Lower leg skin (tissue), 4 donors: ENCODE measurements at regions of chr5 and their contacts with region 1.

Region 1: GRCh38 chr5:135890867-135891266 is 4.8 kb downstream of the IL9 start:
- DNase-seq: no peak
- H3K4me3 ChIP-seq: no peak overlapping the region
- CTCF ChIP-seq: no peak
- POLR2A ChIP-seq: no peak

Region 2: DNA sequence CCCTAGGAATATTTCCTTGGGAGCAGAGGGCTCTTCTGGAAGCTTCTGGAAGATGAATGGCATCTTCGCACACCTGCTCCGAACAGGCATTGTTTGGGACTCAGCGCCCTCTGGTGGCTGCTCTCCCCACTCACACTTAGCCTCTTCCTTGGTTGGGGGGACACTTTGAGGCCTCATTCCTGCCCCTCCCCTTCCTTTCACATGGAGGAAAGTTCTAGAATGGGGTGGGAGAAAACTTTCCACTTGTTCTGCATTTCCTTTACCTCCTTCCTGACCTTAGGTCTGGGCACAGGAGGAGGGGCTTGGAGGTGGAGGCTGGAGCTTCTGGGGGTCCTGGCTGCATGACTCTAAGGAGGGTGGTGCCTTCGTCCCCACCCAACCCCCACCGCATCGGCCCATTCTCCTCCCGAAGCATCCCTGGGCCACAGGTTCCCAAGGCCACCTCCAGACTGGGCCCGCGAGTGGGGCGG is 321.4 kb after region 1 on chr5:
- intact Hi-C with region 1: loop called (anchors 5 kb)
- DNase-seq: peak in 1 of 2 donors; percentile 90
- H3K4me3 ChIP-seq: no peak overlapping the region
- CTCF ChIP-seq: peak in 2 of 3 donors; percentile 16 to 70
- POLR2A ChIP-seq: no peak